Activated CD8-positive, alpha-beta T cell treated with anti-CD3 and anti-CD28 coated beads for 36 hours (primary cell): ENCODE measurements at regions of chr1 and their contacts with region 1.

Region 1: GRCh38 chr1:88683541-88684481 is at the start of gene PKN2:
- DNase-seq: peak; percentile 97
- ATAC-seq: peak; percentile 95
- H3K4me3 Mint-ChIP-seq: peak within 1 kb of the TSS; percentile 90
- H3K27ac Mint-ChIP-seq: peak within 1 kb of the TSS; percentile 96
- H3K4me1 Mint-ChIP-seq: peaks cover 21% of the 10 kb centered on the region
- H3K27me3 Mint-ChIP-seq: no peaks in the 10 kb centered on the region
- CTCF ChIP-seq: no peak
- total RNA-seq, gene PKN2: 18.0 to 18.1 TPM

Region 2: GRCh38 chr1:88557014-88557413 is 126.8 kb before region 1 on chr1:
- CTCF ChIA-PET with region 1: no interaction called
- POLR2A ChIA-PET with region 1: no interaction called
- intact Hi-C with region 1: no loop called
- DNase-seq: no peak
- ATAC-seq: no peak
- H3K4me3 Mint-ChIP-seq: no peak overlapping the region
- H3K27ac Mint-ChIP-seq: no peak overlapping the region
- H3K4me1 Mint-ChIP-seq: no peaks in the 10 kb centered on the region
- H3K27me3 Mint-ChIP-seq: peaks cover 1% of the 10 kb centered on the region
- CTCF ChIP-seq: no peak

Region 3: DNA sequence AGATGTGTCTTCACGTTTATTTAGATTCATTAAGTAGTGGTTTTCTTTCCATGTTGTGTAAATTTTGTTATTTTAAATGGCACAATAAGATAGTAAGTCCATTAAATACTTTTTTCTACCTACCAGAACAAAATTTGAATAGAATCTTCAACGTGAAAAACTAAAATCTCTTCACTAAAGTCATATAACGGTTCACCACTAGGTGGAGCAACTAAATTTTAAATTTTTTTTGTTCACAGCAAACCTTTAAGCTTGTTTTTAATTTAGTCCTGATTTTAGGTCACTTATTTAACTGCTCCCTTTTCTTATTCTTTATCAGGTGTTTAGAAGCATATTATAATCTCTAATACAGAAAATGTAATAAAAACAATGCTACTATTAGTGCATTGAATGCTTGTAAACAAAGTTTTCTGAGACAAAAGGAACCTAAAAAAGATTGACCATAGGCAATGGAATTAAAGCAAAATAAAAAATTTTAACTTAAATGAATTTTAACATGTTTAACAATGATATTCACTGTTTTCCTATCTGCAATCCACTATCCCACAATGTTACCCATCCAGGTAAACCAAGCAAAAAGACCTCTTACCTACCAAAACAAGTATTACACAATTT is 28.0 kb before region 1 on chr1:
- CTCF ChIA-PET with region 1: interaction called, 28 read pairs
- POLR2A ChIA-PET with region 1: interaction called, 13 read pairs
- intact Hi-C with region 1: no loop called
- DNase-seq: no peak
- ATAC-seq: no peak
- H3K4me3 Mint-ChIP-seq: no peak overlapping the region
- H3K27ac Mint-ChIP-seq: no peak overlapping the region
- H3K4me1 Mint-ChIP-seq: peaks cover 10% of the 10 kb centered on the region
- H3K27me3 Mint-ChIP-seq: no peaks in the 10 kb centered on the region
- CTCF ChIP-seq: peak; percentile 80

Region 4: DNA sequence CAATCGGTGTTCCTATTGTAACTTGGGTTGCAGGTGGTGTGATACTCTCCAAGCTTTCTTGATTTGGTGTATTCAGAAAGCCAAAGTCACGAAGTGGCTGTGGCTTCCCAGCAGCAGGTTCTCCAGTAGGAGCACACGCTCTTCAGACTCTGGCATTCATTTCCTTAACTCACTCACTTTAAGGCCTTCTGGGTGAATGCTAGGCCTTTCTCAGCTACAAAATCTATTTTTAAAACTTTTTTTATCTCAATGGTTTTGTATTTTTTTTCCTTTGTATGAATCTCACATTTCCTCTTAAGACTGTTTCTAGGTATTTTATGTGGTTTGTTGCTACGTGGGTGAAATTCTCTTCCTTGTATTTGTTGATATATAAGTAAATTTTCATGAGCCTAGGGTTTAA is 22.6 kb before region 1 on chr1:
- CTCF ChIA-PET with region 1: interaction called, 28 read pairs
- POLR2A ChIA-PET with region 1: interaction called, 13 read pairs
- intact Hi-C with region 1: no loop called
- DNase-seq: peak; percentile 8
- ATAC-seq: peak; percentile 40
- H3K4me3 Mint-ChIP-seq: peak overlapping the region; percentile 62
- H3K27ac Mint-ChIP-seq: peak overlapping the region; percentile 76
- H3K4me1 Mint-ChIP-seq: peaks cover 22% of the 10 kb centered on the region
- H3K27me3 Mint-ChIP-seq: peaks cover 1% of the 10 kb centered on the region
- CTCF ChIP-seq: no peak

Region 5: GRCh38 chr1:88742531-88742930 is 58.7 kb after region 1 on chr1:
- CTCF ChIA-PET with region 1: no interaction called
- POLR2A ChIA-PET with region 1: no interaction called
- intact Hi-C with region 1: no loop called
- DNase-seq: no peak
- ATAC-seq: no peak
- H3K4me3 Mint-ChIP-seq: no peak overlapping the region
- H3K27ac Mint-ChIP-seq: no peak overlapping the region
- H3K4me1 Mint-ChIP-seq: peaks cover 7% of the 10 kb centered on the region
- H3K27me3 Mint-ChIP-seq: no peaks in the 10 kb centered on the region
- CTCF ChIP-seq: no peak

Region 6: DNA sequence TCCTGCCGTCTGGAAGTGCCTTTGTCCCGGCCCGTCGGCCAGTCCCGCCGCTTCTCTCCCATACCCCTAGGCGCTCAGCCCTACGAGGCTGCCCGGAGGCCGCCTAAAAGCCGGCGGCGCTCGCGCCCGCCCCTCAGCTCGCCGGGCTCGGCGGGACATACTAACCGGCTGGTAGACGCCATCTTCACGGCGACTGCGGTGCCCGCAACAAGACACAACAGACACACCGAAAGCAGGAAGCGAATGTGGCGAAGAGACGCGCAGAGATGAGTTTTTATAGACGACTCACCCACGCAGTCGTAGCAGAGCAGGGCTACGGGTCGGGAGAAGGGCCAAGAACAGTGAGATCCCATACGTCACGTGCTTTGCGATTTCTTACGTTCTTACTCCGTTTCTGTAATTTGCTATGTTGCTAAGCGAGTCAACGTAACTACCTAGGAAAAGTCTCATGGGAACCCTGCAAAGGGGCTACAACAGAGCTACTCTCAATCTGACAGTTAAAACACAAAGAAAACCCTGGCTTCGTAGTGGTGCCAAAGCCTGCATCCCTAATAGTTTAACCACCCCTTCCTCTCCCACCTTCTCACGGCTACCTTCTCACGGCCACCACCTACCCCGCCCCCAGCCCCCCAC is 207.6 kb after region 1 on chr1 and contains the start of gene GTF2B:
- CTCF ChIA-PET with region 1: no interaction called
- POLR2A ChIA-PET with region 1: interaction called, 11 read pairs
- intact Hi-C with region 1: no loop called
- DNase-seq: peak; percentile 97
- ATAC-seq: peak; percentile 89
- H3K4me3 Mint-ChIP-seq: peak within 1 kb of the TSS; percentile 81
- H3K27ac Mint-ChIP-seq: peak within 1 kb of the TSS; percentile 96
- H3K4me1 Mint-ChIP-seq: peaks cover 38% of the 10 kb centered on the region
- H3K27me3 Mint-ChIP-seq: no peaks in the 10 kb centered on the region
- CTCF ChIP-seq: no peak
- total RNA-seq, gene GTF2B: 40.7 to 42.0 TPM